Aorta (tissue), 5 donors: ENCODE measurements at regions of chr6 and their contacts with region 1.

Region 1: DNA sequence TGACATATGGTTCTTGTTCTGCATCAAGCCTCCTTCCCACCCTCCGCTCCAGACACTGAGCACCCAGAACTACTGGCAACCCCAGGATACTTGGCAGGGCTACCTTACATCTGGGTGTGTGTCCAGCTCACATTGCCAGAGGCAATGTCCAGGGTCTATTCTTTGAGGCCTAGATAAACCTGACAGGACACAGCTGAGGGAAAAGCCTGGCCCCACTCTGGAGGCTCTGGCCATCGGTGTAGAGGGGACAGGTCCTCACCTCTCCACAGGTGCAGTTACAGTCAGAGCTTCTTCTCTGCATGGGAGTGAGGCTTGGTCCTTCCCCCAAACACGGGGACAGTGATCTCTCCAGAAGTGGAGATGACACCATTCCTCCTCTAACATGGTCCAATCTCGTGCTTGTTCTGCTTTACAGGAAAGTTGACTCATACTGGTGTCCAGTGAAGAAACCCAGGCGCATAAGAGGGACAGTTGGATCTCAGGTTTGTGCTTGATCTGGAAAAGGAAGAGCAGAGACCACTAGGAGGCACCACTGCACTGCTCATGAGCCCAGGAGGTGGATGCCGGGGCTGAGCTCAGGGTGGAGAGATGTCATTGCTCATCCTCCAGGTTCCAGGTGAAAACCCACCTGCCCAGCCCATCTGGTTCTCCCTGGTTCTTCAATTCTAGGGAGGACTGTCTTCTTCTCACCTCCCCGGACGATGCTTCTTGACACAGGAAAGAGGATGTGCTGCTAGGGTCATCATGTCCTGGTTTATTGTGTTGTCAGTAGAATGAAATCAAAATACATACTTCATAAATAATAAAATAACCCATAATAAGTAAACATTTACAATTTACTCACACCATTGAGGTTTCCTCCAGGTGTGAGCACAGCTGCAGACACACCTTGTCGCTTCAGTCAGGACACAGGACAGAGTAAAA is 14.7 kb downstream of the HLA-F start:
- DNase-seq: peak in 1 of 2 donors; percentile 73
- ATAC-seq: peak; percentile 83
- H3K4me3 ChIP-seq: no peak overlapping the region
- H3K27ac ChIP-seq: no peak overlapping the region
- H3K4me1 ChIP-seq: no peaks in the 10 kb centered on the region
- H3K27me3 ChIP-seq: no peaks in the 10 kb centered on the region

Region 2: DNA sequence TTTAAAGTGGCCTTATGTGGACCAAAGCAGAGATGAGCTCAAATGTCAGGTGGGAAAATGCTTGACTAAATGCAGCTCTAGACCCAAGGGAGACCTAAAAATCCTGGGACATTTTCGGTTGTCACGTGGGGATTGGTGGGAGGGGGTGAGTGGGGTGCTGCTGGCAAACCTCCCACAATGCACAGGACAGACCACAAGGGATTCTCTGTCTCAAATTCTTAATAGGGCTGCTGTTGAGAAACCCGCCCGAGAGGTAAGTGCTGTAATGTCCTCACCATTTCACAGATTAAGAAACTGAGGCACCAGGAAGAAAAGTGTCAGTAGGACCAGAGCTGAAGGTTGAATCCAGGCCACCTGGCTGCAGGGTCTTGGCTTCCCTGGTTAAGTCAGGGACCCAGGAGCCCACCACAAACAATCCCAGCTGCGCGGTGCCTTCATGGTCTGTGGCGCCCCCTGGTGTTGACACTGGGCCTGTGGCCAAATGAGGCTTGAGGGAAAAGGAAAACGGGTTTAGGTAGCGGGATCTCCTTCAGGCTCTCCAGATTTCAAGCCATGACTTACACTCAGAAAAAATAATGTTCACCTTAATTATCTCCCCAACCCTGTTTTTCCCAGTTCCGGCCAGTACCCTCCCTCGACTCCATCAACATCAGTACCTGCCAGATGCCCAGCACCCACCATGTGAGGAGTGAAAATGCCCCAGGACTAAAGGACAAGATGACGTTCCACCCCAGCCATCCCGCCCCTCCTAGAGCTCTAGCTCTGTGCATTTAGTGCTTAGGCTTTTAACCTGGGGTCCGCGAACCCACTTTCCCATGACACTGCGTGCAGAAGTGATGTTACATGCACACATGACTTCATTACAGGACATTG is 96.8 kb after region 1 on chr6:
- intact Hi-C with region 1: loop called (anchors 2 to 10 kb)
- DNase-seq: peak in 1 of 2 donors; percentile 84
- ATAC-seq: peak; percentile 70
- H3K4me3 ChIP-seq: no peak overlapping the region
- H3K27ac ChIP-seq: no peak overlapping the region
- H3K4me1 ChIP-seq: no peaks in the 10 kb centered on the region
- H3K27me3 ChIP-seq: no peaks in the 10 kb centered on the region